Tibial artery (tissue), 4 donors: ENCODE measurements at regions of chr1 and their contacts with region 1.

Region 1: DNA sequence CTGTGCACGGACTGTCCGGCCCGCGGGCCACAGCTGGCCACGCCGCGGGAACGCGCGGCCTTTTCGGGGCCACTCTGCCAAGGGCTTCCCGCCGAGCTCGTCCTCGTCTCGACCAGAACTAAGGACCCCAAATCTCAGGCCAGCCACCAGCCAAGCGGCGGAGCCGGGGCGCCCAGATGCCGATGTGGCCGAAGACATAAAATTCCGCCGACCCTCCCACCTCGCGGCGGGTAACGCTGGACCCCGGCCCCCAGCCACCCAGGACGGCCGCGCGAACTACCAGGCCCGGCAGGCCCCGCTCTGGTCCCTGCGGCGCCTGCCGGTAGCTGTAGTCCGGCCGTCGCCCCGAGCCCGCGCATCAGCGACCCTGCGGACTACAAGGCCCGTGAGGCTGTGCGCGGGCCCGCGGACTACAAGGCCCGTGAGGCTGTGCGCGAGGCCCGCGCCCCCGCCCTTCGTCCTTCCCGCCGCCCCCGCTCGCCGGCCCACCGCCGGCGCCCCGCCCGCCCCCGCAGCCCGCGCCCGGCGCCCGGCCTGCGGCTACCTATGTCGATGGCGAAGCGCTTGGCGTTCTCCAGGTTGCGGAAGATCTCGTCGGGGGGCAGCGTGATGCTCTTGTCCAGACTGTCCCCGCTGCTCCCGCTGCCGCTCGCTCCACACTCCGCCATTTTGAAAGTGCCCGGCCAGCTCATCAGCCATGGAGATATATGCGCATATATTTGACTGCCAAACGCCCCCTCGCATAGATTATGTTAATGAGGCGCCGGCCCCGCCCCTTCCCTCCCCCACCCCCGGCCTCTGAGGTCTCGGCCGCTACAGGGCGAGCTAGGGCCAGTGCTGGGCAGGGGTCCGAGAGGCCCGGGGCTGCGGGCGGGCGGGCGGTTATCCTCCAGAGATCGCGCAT is at the start of gene PANK4:
- DNase-seq: peak; percentile 94
- H3K4me3 ChIP-seq: peak within 1 kb of the TSS; percentile 70 to 80
- H3K27ac ChIP-seq: peak within 1 kb of the TSS; percentile 79 to 84
- H3K4me1 ChIP-seq: peaks cover 15 to 68% (median 63%) of the 10 kb centered on the region in 4 donors
- H3K27me3 ChIP-seq: peaks cover 0 to 4% of the 10 kb centered on the region in 2 donors
- CTCF ChIP-seq: peak in 1 of 2 experiments; percentile 13

Region 2: DNA sequence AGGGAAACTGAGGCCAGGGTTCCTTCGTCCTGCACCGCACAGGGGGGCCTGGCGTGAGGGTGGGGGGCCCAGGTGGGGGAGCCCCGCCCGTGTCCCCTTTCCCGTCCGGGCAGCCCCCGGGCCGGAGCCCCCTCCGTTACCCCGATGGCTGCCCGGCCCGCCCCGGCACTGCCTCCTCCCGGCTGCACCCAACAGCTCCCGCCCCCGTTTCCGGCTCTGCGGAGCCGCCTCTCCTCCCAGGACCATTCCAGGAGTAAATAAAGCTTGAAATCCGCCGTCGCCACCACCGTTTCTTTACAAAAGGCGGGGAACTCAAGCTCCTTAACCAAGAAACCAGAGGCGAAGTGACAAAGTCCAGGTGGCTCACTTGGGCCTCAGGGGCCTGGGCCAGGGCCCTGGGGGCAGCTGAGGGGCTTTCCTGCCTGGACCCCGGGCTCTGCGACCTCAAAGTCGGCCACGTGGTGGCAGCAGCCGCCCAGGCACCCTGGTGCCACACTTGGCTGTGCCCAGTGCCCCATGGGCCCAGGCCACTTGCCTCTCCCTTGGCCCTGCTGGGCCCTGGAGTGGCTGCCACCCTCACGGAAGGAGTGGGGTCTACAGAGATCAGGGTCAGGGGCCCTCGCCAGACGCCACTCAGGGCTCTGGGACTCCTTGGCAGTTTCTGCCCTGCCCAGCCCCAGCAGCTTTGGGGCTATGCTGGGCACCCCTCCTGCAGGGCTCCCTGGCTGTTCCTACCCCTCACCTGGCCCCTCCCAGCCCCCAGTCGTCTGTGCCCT is 331.1 kb before region 1 on chr1:
- intact Hi-C with region 1: loop called (anchors 2 kb)
- DNase-seq: peak; percentile 91 to 96
- H3K4me3 ChIP-seq: peak overlapping the region; percentile 60 to 71
- H3K27ac ChIP-seq: peak overlapping the region; percentile 93 to 94
- H3K4me1 ChIP-seq: peaks cover 8 to 68% (median 62%) of the 10 kb centered on the region in 4 donors
- H3K27me3 ChIP-seq: no peaks in the 10 kb centered on the region
- CTCF ChIP-seq: peak; percentile 95 to 98

Region 3: DNA sequence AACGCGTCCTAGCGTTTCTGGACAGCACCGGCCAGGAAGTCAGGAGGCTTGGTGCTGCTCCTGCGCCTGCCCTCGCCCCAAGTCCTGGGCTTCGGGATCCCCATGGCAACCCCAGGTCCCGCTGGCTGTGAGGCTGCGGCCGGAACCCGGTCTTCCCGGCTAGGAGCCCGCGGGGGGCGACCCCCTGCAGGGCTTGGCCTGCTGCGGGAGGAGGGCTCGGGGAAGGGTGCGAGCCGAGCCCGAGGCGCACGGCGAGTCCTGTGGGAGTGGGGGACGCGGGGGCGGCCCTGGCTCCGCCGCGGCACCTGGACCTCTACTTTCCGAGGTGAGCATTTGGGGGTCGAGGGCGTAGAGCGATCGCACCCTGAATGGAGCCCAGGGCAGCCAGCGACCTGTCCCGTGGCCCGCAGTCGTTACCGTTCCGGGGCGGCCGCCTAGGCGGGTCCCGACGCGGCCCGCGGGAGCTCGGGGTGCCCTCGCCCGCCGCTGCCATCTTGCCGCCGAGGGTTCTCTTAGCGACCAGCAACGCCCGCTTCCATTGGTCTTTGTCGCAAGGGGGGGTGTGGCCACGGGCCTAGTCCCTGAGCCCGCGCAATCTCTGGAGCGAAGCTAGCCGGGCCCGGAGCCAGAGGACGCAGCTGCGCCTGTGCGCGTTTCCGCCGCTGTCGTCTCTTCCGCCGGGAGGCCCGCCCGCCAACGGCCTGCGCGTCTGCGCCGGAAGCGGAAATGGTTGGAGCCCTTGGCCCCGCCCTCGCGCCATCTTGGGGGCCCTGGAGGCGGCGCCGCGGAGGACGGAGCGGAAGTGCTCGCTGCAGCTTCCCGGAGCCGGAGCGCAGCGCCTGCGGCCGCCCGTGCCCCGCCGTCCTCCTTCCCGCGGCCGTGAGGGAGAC is 134.9 kb before region 1 on chr1 and contains the starts of genes MORN1 and RER1:
- intact Hi-C with region 1: loop called (anchors 5 kb)
- DNase-seq: peak; percentile 98 to 99
- H3K4me3 ChIP-seq: peak within 1 kb of the TSS; percentile 87 to 99
- H3K27ac ChIP-seq: peak within 1 kb of the TSS; percentile 74 to 89
- H3K4me1 ChIP-seq: peaks cover 4 to 45% (median 34%) of the 10 kb centered on the region in 4 donors
- H3K27me3 ChIP-seq: no peaks in the 10 kb centered on the region
- CTCF ChIP-seq: no peak

Region 4: GRCh38 chr1:2545759-2546514 is 19.8 kb after region 1 on chr1:
- intact Hi-C with region 1: loop called (anchors 2 kb)
- DNase-seq: peak; percentile 88 to 94
- H3K4me3 ChIP-seq: peak overlapping the region; percentile 56 to 64
- H3K27ac ChIP-seq: peak overlapping the region; percentile 95 to 97
- H3K4me1 ChIP-seq: peaks cover 0 to 70% (median 42%) of the 10 kb centered on the region in 4 donors
- H3K27me3 ChIP-seq: peaks cover 0 to 56% of the 10 kb centered on the region in 2 donors
- CTCF ChIP-seq: no peak

Region 5: GRCh38 chr1:2556277-2556677 is 30.1 kb after region 1 on chr1 and contains the start of gene TNFRSF14:
- intact Hi-C with region 1: loop called (anchors 5 kb)
- DNase-seq: peak; percentile 60 to 85
- H3K4me3 ChIP-seq: peak within 1 kb of the TSS; percentile 62
- H3K27ac ChIP-seq: peak within 1 kb of the TSS; percentile 76 to 78
- H3K4me1 ChIP-seq: peaks cover 0 to 35% (median 22%) of the 10 kb centered on the region in 4 donors
- H3K27me3 ChIP-seq: no peaks in the 10 kb centered on the region
- CTCF ChIP-seq: no peak

Region 6: DNA sequence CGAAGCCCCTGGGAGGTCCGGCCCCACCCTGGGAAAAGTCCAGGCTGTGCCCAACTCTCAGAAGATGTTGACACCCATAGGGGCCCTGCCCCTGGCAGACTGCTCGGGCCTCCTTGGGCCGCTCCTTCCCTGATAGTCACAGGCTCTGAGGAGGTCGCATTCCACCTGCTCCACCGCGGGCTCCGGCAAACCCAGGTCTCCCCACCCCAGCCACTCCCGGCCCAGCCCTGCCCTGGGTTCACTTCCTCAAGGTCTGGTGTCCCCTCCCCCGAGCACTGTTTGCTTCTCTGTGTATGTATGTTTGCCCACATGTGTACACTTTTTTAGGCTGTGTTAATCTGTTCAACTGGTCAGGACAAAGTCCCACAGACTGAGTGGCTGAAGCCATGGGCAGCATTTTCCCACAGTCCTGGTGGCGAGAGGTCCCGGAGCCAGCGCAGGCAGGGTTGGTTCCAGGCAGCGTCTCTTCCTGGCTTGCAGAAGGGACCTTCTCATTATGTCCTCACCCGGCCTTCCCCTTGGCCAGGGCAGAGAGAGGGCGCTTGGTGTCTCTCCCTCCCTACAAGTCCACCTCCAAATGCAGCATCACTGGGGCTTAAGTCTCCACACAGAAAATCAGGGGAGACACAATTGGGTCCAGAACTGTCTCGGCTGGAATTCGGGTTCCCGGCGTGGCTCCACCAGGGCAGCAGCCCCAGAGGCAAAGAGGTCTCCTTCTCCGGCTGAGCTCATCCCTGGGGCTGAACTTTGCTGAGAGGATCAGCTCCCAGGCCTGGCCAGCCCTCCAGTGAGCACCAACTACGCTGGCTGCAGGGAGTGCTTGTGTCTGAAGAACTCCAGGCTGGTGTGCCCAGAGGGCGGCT is 49.9 kb after region 1 on chr1:
- intact Hi-C with region 1: no loop called
- DNase-seq: no peak
- H3K4me3 ChIP-seq: no peak overlapping the region
- H3K27ac ChIP-seq: no peak overlapping the region
- H3K4me1 ChIP-seq: peaks cover 0 to 8% (median 0%) of the 10 kb centered on the region in 4 donors
- H3K27me3 ChIP-seq: peaks cover 0 to 35% of the 10 kb centered on the region in 2 donors
- CTCF ChIP-seq: no peak